Dorsolateral prefrontal cortex (tissue), 120 donors: ENCODE measurements at regions of chr1 and their contacts with region 1.

Region 1: DNA sequence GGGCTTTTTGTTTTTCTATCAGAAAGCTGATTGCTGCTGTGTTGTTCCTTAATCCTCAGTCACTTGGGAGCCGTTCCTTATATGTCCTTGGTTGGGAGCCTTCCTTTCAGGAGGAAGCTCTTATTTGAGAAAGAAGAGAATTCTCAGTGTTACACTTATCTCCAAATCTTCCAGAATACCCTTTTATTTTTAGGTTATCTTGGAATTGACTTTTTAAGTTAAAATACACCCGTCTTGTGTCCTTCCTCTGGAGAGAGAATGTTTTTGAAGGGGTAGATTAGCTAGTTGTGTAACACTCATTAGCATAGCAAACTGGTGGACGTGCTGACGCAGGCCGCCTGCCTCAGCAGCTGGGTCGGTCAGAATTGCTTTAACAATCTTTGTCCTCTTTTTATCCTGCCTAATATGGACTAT is 42.1 kb downstream of the LRRC8B start:
- DNase-seq: peak in 9 of 10 donors; percentile 62 to 78 (median 72)
- H3K4me3 ChIP-seq: peak overlapping the region in 52 of 59 donors; percentile 4 to 58 (median 28)
- H3K27ac ChIP-seq: peak overlapping the region; percentile 80 to 98 (median 93)
- H3K27me3 ChIP-seq: no peaks in the 10 kb centered on the region
- CTCF ChIP-seq: peak in 9 of 56 donors; percentile 8 to 24 (median 13)

Region 2: GRCh38 chr1:89547563-89548485 is 18.9 kb before region 1 on chr1:
- intact Hi-C with region 1: loop called in 1 of 2 experiments (anchors 2 kb)
- DNase-seq: peak in 4 of 10 donors; percentile 39 to 46 (median 40)
- H3K4me3 ChIP-seq: peak overlapping the region in 4 of 59 donors; percentile 6 to 25 (median 16)
- H3K27ac ChIP-seq: peak overlapping the region in 57 of 59 donors; percentile 3 to 89 (median 76)
- H3K27me3 ChIP-seq: no peaks in the 10 kb centered on the region
- CTCF ChIP-seq: peak in 1 of 56 donors; percentile 5